Caco-2 (cell line): ENCODE measurements at regions of chr10 and their contacts with region 1.

Region 1: DNA sequence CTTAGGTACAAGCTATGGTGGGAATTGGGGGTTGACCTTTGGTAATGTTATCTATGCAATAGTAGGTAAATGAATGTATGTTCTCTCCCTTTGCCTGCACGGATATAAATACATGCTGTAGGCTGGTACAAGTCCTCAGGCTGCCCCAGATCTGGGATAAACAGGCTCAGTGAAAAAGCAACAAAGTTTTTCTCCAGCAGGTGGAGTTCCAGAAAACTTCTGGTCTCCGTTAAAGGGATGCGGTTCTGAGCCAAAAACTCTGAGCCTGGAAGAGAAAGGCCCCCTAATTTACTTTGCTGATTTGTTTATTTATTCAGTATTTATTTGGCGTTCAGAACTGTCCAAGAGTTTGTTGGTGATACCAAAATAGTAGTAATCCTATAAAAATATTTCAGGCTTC is 204.7 kb downstream of the ADRA2A start:
- DNase-seq: peak in 1 of 2 experiments; percentile 29
- H3K4me3 ChIP-seq: no peak overlapping the region
- H3K4me3 Mint-ChIP-seq: no peak overlapping the region
- H3K27ac Mint-ChIP-seq: no peak overlapping the region
- H3K4me1 ChIP-seq: no peaks in the 10 kb centered on the region
- H3K4me1 Mint-ChIP-seq: no peaks in the 10 kb centered on the region
- H3K27me3 ChIP-seq: no peaks in the 10 kb centered on the region
- H3K27me3 Mint-ChIP-seq: peaks cover 14% of the 10 kb centered on the region
- CTCF ChIP-seq: peak; percentile 37 to 45

Region 2: GRCh38 chr10:111186358-111186757 is 95.2 kb before region 1 on chr10:
- CTCF ChIA-PET with region 1: no interaction called
- POLR2A ChIA-PET with region 1: no interaction called
- intact Hi-C with region 1: no loop called
- DNase-seq: no peak
- H3K4me3 ChIP-seq: no peak overlapping the region
- H3K4me3 Mint-ChIP-seq: no peak overlapping the region
- H3K27ac Mint-ChIP-seq: no peak overlapping the region
- H3K4me1 ChIP-seq: no peaks in the 10 kb centered on the region
- H3K4me1 Mint-ChIP-seq: no peaks in the 10 kb centered on the region
- H3K27me3 ChIP-seq: no peaks in the 10 kb centered on the region
- H3K27me3 Mint-ChIP-seq: peaks cover 9% of the 10 kb centered on the region
- CTCF ChIP-seq: no peak

Region 3: GRCh38 chr10:111360260-111360925 is 78.9 kb after region 1 on chr10:
- CTCF ChIA-PET with region 1: no interaction called
- POLR2A ChIA-PET with region 1: no interaction called
- intact Hi-C with region 1: loop called (anchors 1 kb)
- DNase-seq: peak; percentile 59 to 66
- H3K4me3 ChIP-seq: no peak overlapping the region
- H3K4me3 Mint-ChIP-seq: no peak overlapping the region
- H3K27ac Mint-ChIP-seq: no peak overlapping the region
- H3K4me1 ChIP-seq: no peaks in the 10 kb centered on the region
- H3K4me1 Mint-ChIP-seq: peaks cover 5% of the 10 kb centered on the region
- H3K27me3 ChIP-seq: no peaks in the 10 kb centered on the region; the same call in 1 of the 2 replicates
- H3K27me3 Mint-ChIP-seq: peaks cover 11% of the 10 kb centered on the region
- CTCF ChIP-seq: peak; percentile 62 to 82